Activated CD4-positive, alpha-beta memory T cell treated with anti-CD3 and anti-CD28 coated beads, Interleukin-2, amount 10 ng/mL, durations not matched to agents 7 days and 5 days (primary cell): ENCODE measurements at regions of chr9 and their contacts with region 1.

Region 1: DNA sequence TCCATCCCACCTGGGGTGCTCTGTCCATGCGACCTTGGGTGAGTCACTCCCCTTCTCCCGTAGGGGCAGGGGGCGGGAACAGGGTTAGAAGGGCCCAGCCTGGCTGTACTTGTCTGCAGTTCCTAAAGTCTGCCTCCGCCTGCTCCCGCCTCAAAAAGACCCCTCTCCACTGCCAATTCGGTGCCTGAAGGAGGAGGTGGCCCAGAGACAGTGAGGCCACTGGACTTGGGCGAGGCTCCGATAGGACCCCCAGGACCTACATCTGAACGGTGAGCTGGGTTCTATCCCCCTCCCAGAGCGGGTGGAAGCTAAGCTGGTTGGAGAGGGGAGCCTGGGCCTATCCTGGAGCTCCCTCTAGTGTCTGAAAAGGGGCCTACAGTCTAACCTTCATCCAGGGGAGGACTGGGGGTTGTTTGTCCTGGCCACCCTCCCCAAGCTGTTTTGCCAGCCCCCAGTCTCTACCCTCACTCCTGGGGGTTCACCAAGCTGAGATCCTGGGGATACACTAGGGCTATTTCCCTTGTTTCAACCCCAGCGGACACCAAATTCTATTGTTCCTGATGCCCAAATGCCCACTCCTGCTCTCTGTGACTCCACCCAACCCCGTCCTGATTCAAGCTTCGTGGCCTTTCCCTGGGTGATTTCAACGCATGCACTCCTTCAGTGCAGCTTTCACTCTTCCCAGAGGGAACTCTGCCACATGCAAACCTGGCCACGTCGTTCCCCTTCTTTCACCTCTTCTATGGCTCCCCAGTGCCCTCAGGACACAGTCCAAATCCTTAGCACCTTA is 6.1 kb upstream of the CRB2 start:
- DNase-seq: peak; percentile 71
- H3K4me3 Mint-ChIP-seq: no peak overlapping the region
- H3K27ac Mint-ChIP-seq: no peak overlapping the region
- H3K4me1 Mint-ChIP-seq: no peaks in the 10 kb centered on the region
- H3K27me3 Mint-ChIP-seq: peaks cover 6% of the 10 kb centered on the region

Region 2: GRCh38 chr9:123081824-123082223 is 268.1 kb before region 1 on chr9:
- CTCF ChIA-PET with region 1: interaction called, 33 read pairs
- POLR2A ChIA-PET with region 1: interaction called, 3 read pairs
- DNase-seq: no peak
- H3K4me3 Mint-ChIP-seq: no peak overlapping the region
- H3K27ac Mint-ChIP-seq: no peak overlapping the region
- H3K4me1 Mint-ChIP-seq: peaks cover 8% of the 10 kb centered on the region
- H3K27me3 Mint-ChIP-seq: no peaks in the 10 kb centered on the region

Region 3: GRCh38 chr9:123102375-123103110 is 247.3 kb before region 1 on chr9:
- CTCF ChIA-PET with region 1: interaction called, 16 read pairs
- POLR2A ChIA-PET with region 1: no interaction called
- DNase-seq: no peak
- H3K4me3 Mint-ChIP-seq: no peak overlapping the region
- H3K27ac Mint-ChIP-seq: no peak overlapping the region
- H3K4me1 Mint-ChIP-seq: no peaks in the 10 kb centered on the region
- H3K27me3 Mint-ChIP-seq: no peaks in the 10 kb centered on the region

Region 4: GRCh38 chr9:123291736-123292135 is 58.1 kb before region 1 on chr9:
- CTCF ChIA-PET with region 1: no interaction called
- POLR2A ChIA-PET with region 1: no interaction called
- DNase-seq: no peak
- H3K4me3 Mint-ChIP-seq: no peak overlapping the region
- H3K27ac Mint-ChIP-seq: no peak overlapping the region
- H3K4me1 Mint-ChIP-seq: no peaks in the 10 kb centered on the region
- H3K27me3 Mint-ChIP-seq: peaks cover 19% of the 10 kb centered on the region

Region 5: DNA sequence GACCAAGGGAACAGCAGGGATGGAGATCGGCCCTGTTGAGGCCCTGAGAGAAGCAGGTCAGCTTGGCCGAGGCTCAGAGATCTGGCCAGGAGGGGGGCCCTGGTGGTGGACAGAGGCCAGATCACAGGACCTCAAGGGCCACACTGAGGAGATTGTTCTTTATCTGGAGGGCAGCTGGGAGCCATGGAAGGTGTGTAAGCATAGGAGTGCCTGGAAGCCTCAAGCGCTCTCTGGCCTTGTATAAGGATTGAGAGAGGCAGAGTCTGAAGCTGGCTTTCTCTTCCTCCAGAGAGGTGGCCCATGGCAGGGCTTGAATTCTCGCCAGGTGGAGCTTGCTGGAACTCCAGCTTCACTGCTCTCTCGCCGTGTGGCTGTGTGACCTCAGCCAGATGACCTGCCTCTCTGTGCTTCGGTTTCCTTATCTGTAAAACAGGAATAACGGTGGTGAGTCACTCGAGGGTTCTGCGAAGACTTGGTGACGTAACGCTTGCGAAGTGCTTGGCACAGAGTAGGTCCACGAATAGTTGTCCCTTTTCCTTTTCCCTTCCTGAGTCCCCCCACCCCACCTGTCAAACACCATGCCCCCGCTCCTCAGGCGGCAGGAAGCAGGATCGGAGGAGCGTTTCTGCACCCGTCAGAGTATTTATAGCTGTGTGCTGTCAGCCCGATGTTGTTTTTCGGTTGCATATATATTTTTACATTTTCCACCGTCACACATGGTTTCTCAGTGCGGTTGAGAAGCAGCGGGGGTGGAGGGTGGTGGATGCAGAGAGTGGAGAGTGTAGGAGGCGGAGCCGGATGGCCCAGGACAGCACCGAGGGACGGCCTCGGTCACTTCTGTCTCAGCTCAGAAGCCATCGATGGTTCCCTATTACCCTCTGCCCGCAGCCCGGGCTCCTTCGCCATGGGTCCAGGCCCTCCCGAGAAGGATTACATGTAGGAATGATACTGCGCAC is 10.9 kb before region 1 on chr9:
- CTCF ChIA-PET with region 1: interaction called, 16 read pairs
- POLR2A ChIA-PET with region 1: interaction called, 8 read pairs
- DNase-seq: peak; percentile 80
- H3K4me3 Mint-ChIP-seq: peak overlapping the region; percentile 77
- H3K27ac Mint-ChIP-seq: peak overlapping the region; percentile 97
- H3K4me1 Mint-ChIP-seq: peaks cover 36% of the 10 kb centered on the region
- H3K27me3 Mint-ChIP-seq: no peaks in the 10 kb centered on the region

Region 6: DNA sequence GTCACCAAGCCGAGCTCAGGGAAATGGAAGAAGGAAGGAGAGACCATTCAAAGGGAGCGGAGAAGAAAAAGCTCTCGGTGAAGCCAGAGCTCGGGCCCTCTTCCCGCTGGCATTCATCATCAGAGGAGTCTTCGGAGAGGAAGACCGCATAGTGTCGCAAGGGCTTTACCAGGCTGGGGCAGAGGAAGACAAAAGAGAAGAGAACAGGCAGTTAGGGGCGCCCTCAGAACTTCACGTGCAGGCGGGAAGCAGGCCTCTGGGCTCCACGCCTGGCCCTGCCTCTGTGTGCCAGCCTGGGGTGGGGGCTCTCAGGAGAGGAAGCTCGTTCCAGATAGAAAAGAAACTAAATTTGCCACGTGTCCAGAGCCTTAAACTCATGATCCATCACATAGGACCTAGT is 37.8 kb after region 1 on chr9:
- CTCF ChIA-PET with region 1: interaction called, 28 read pairs
- POLR2A ChIA-PET with region 1: no interaction called
- DNase-seq: no peak
- H3K4me3 Mint-ChIP-seq: no peak overlapping the region
- H3K27ac Mint-ChIP-seq: no peak overlapping the region
- H3K4me1 Mint-ChIP-seq: no peaks in the 10 kb centered on the region
- H3K27me3 Mint-ChIP-seq: no peaks in the 10 kb centered on the region